IMR-90 (cell line): ENCODE measurements at regions of chr15 and their contacts with region 1.

Region 1: GRCh38 chr15:31508656-31509055 is 182.0 kb downstream of the KLF13 start:
- DNase-seq: no peak
- ATAC-seq: no peak
- H3K4me3 ChIP-seq: no peak overlapping the region
- H3K27ac ChIP-seq: no peak overlapping the region
- H3K4me1 ChIP-seq: no peaks in the 10 kb centered on the region
- H3K27me3 ChIP-seq: peaks cover 2% of the 10 kb centered on the region
- CTCF ChIP-seq: no peak
- POLR2A ChIP-seq: no peak
- RAD21 ChIP-seq: no peak

Region 2: DNA sequence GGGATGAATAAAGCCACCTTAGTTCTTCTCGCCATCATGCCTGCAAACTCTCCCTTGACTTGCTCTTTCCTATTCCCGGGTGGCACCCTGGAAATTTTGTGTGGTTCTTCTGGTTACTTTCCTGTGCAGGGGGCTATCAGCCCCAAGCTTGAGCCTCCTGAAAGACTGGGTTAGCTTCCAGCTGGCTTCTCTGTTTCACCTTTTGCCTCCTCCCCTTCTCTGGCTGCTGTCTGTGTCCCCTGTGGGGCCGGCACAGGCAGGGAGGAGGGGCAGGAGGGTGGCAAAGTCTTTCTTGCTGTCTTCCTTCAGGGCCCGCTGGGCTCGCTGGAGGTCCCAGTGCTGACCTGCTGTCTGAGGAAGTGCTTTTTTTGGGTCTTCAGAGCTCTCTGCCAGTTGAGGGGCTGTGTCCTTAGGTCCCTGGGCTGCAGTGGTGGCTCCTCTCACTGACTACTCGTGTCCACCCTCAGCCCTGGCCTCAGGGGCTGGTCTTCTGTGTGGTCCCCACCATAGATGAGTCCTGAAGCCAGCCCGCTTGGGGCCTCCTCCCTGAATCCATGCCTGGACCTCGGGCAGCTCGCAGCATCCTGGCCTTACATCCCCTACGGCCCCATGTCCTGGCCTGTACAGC is 14.5 kb after region 1 on chr15:
- CTCF ChIA-PET with region 1: no interaction called
- POLR2A ChIA-PET with region 1: no interaction called
- dilution Hi-C with region 1: no loop called
- in situ Hi-C with region 1: no loop called
- intact Hi-C with region 1: no loop called
- DNase-seq: no peak
- ATAC-seq: no peak
- H3K4me3 ChIP-seq: no peak overlapping the region
- H3K27ac ChIP-seq: no peak overlapping the region
- H3K4me1 ChIP-seq: no peaks in the 10 kb centered on the region
- H3K27me3 ChIP-seq: peaks cover 15% of the 10 kb centered on the region
- CTCF ChIP-seq: no peak
- POLR2A ChIP-seq: no peak
- RAD21 ChIP-seq: no peak

Region 3: DNA sequence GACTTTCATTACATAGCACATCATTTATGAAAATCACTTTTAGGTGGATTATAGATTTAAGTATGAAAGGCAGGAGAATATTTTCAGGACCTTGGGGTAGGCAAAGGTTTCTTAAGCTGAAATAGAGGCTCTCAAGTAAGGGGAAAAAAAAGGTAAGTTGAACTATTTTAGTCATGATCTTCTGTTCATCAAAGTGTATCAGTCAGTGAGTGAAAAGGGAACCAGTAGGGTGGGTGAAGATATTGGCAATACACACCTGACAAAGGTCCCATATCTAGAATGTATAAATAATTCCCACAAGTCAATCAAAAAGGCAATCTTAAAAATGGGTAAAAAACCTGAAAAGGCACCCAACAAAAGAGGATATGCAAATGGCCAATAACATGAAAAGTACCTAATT is 36.6 kb after region 1 on chr15:
- CTCF ChIA-PET with region 1: no interaction called
- POLR2A ChIA-PET with region 1: no interaction called
- dilution Hi-C with region 1: no loop called
- in situ Hi-C with region 1: no loop called
- intact Hi-C with region 1: loop called (anchors 5 kb)
- DNase-seq: no peak
- ATAC-seq: no peak
- H3K4me3 ChIP-seq: no peak overlapping the region
- H3K27ac ChIP-seq: no peak overlapping the region
- H3K4me1 ChIP-seq: no peaks in the 10 kb centered on the region
- H3K27me3 ChIP-seq: peaks cover 8% of the 10 kb centered on the region
- CTCF ChIP-seq: no peak
- POLR2A ChIP-seq: no peak
- RAD21 ChIP-seq: no peak

Region 4: GRCh38 chr15:31792611-31793385 is 284.1 kb after region 1 on chr15:
- CTCF ChIA-PET with region 1: no interaction called
- POLR2A ChIA-PET with region 1: no interaction called
- dilution Hi-C with region 1: no loop called
- in situ Hi-C with region 1: no loop called
- intact Hi-C with region 1: no loop called
- DNase-seq: no peak
- ATAC-seq: no peak
- H3K4me3 ChIP-seq: no peak overlapping the region
- H3K27ac ChIP-seq: no peak overlapping the region
- H3K4me1 ChIP-seq: no peaks in the 10 kb centered on the region
- H3K27me3 ChIP-seq: no peaks in the 10 kb centered on the region
- CTCF ChIP-seq: no peak
- POLR2A ChIP-seq: no peak
- RAD21 ChIP-seq: no peak